MCF 10A (cell line): ENCODE measurements at regions of chr10 and their contacts with region 1.

Region 1: GRCh38 chr10:100896876-100897461 is 15.8 kb upstream of the SLF2 start:
- DNase-seq: no peak
- H3K4me3 Mint-ChIP-seq: no peak overlapping the region
- H3K27ac Mint-ChIP-seq: no peak overlapping the region
- H3K4me1 Mint-ChIP-seq: no peaks in the 10 kb centered on the region
- H3K27me3 Mint-ChIP-seq: no peaks in the 10 kb centered on the region
- CTCF ChIP-seq: no peak

Region 2: GRCh38 chr10:100912605-100913469 is 15.9 kb after region 1 on chr10 and contains the start of gene SLF2:
- CTCF ChIA-PET with region 1: no interaction called
- POLR2A ChIA-PET with region 1: interaction called, 12 read pairs
- intact Hi-C with region 1: no loop called
- DNase-seq: peak; percentile 98
- H3K4me3 Mint-ChIP-seq: peak within 1 kb of the TSS; percentile 97
- H3K27ac Mint-ChIP-seq: peak within 1 kb of the TSS; percentile 64
- H3K4me1 Mint-ChIP-seq: peaks cover 15% of the 10 kb centered on the region
- H3K27me3 Mint-ChIP-seq: no peaks in the 10 kb centered on the region
- CTCF ChIP-seq: no peak
- total RNA-seq, gene SLF2: 27.0 and 30.6 TPM in 2 replicates